ENCODE measurements at regions of chr9 and their contacts with region 1.

Region 1: DNA sequence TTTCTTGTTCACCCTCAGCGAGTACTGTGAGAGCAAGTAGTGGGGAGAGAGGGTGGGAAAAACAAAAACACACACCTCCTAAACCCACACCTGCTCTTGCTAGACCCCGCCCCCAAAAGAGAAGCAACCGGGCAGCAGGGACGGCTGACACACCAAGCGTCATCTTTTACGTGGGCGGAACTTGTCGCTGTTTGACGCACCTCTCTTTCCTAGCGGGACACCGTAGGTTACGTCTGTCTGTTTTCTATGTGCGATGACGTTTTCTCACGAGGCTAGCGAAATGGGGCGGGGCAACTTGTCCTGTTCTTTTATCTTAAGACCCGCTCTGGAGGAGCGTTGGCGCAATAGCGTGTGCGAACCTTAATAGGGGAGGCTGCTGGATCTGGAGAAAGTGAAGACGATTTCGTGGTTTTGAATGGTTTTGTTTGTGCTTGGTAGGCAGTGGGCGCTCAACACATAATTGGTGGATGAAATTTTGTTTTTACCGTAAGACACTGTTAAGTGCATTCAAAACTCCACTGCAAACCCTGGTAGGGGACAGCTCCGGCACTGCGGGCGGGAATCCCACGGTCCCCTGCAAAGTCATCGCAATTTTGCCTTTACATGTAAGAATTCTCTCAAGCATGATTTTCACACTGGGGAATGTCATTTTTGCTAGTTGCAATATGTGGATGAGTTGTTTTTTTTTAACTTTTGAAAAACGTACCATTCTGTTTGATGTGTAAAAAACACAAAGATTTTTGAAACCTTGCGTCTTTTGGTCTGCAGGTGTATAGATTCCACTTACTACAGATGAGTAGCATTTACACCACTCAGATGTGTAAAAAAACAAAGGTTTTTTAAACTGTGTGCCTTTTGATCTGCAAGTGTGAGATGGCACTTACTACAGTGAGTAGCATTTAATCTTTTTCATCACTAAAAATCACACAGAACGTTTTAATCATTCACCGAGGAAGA is 631 bp upstream of the C9orf72 start:
- DNase-seq: peak; percentile 98
- ATAC-seq: peak; percentile 72
- H3K4me3 Mint-ChIP-seq: peak overlapping the region; percentile 88
- H3K27ac Mint-ChIP-seq: peak overlapping the region; percentile 100
- H3K4me1 Mint-ChIP-seq: peaks cover 32% of the 10 kb centered on the region
- H3K27me3 Mint-ChIP-seq: no peaks in the 10 kb centered on the region

Region 2: GRCh38 chr9:26892251-26893029 is 681.5 kb before region 1 on chr9 and contains the start of gene CAAP1:
- CTCF ChIA-PET with region 1: no interaction called
- POLR2A ChIA-PET with region 1: no interaction called
- intact Hi-C with region 1: loop called in 1 of 2 experiments (anchors 1 kb)
- DNase-seq: peak; percentile 98
- ATAC-seq: peak; percentile 92
- H3K4me3 Mint-ChIP-seq: peak within 1 kb of the TSS; percentile 100
- H3K27ac Mint-ChIP-seq: peak within 1 kb of the TSS; percentile 100
- H3K4me1 Mint-ChIP-seq: peaks cover 36% of the 10 kb centered on the region
- H3K27me3 Mint-ChIP-seq: no peaks in the 10 kb centered on the region
- total RNA-seq, gene CAAP1: 17.1 to 21.4 TPM

Region 3: GRCh38 chr9:26946753-26947727 is 626.9 kb before region 1 on chr9 and contains the start of gene PLAA:
- CTCF ChIA-PET with region 1: no interaction called
- POLR2A ChIA-PET with region 1: no interaction called
- intact Hi-C with region 1: loop called in 1 of 2 experiments (anchors 1 kb)
- DNase-seq: peak; percentile 93
- ATAC-seq: peak; percentile 96
- H3K4me3 Mint-ChIP-seq: peak within 1 kb of the TSS; percentile 88
- H3K27ac Mint-ChIP-seq: peak within 1 kb of the TSS; percentile 99
- H3K4me1 Mint-ChIP-seq: peaks cover 48% of the 10 kb centered on the region
- H3K27me3 Mint-ChIP-seq: peaks cover 3% of the 10 kb centered on the region
- total RNA-seq, gene PLAA: 30.9 to 36.5 TPM

Region 4: DNA sequence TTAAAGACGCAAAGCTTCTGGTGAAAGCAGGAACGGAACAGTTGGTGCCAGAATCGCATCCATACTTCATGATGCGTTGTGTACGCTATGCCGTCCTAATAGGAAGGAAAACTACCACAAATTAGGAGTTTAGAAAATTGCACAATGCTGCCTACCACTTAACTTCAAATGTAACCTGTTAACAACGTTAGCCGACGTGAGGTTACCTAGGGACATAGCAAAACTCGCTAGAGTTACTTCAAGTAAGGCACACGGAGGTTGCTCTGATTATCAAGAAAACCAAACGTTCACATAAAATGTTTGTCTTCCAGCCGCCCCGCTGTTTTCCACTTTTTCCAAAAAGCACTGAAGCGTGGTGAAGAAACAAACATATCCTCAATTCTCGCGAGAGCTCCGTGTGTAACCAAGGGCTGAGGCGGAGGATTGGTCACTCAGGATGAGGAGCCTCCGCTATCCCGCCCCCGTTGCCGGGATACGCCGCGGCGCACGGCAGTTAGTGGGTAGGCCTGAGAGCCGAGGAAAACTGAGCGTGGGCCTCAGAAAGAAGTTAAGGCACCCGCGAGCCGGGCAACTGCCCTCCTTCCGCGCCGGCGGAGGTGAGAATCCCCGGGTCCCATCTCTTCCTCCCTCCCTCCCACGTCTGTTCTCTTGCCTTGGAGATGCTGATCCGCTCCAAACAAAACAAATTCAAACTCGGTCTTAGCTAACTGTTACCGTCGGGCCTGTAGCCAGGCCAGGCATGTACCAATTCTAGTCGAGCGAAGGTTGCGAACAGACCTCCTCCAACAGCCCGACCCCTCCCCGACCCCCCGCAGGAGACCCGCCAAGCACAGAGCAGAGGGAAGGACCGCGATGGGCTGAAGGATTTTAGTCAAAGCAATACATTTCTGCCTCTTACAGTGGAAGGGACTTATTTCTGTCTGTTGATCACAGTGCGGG is 617.7 kb before region 1 on chr9 and contains the start of gene IFT74:
- CTCF ChIA-PET with region 1: no interaction called
- POLR2A ChIA-PET with region 1: no interaction called
- intact Hi-C with region 1: loop called (anchors 1 to 5 kb)
- DNase-seq: peak; percentile 96
- ATAC-seq: peak; percentile 99
- H3K4me3 Mint-ChIP-seq: peak within 1 kb of the TSS; percentile 88
- H3K27ac Mint-ChIP-seq: peak within 1 kb of the TSS; percentile 85
- H3K4me1 Mint-ChIP-seq: peaks cover 32% of the 10 kb centered on the region
- H3K27me3 Mint-ChIP-seq: no peaks in the 10 kb centered on the region
- total RNA-seq, gene IFT74: 10.5 to 11.6 TPM

Region 5: DNA sequence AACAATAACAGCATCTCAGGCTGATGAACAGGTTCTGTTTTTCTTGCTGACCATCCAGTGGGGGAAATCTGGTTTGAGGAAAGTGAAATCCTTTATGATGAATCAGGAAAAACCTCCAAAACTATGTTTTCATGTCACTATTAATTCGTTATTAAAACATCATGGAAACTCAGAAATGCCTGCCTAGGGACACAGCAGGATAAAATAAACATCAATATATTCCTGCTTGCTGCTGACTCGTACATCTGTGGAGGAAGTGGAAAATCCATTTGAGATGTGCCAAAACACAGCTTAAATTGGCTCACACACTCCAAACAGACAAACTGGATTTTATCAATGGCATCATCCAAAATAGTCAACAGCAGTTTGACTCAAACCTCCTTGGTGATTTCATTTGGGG is 411.9 kb before region 1 on chr9:
- CTCF ChIA-PET with region 1: no interaction called
- POLR2A ChIA-PET with region 1: no interaction called
- intact Hi-C with region 1: no loop called
- DNase-seq: no peak
- ATAC-seq: no peak
- H3K4me3 Mint-ChIP-seq: no peak overlapping the region
- H3K27ac Mint-ChIP-seq: no peak overlapping the region
- H3K4me1 Mint-ChIP-seq: no peaks in the 10 kb centered on the region
- H3K27me3 Mint-ChIP-seq: peaks cover 4% of the 10 kb centered on the region

Region 6: DNA sequence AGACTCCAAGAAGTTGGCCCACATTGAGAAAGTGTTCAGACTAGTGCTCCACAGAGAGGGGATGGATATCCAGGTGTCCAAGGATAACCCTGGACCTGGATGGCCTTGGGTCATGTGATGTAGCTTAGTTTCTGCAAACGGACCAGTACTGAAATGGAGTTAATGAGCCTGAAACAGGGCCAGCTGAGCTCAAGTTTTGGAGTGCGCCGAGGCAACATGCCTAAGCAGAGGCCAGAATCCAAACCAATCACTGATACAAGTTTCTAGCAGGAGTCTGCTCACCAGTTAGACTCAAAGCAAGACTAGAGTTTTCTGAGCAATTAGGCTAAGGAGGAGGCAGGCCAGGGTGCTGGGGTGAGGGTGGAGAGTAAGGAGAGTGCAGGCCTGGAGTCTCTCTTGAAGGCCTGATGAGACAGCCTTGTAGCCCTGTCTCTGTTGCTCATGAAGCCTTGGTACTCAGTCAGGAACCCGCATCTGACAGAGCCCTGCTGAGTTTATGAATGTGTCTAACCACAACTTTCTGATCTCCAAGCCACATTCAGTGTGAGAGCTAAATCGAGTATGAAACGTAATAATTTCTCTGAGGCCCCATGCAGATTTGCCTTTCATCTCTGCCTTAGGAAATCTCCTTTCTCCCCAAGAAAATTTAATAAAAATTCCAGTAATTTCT is 208.1 kb before region 1 on chr9:
- CTCF ChIA-PET with region 1: no interaction called
- POLR2A ChIA-PET with region 1: interaction called, 6 read pairs
- intact Hi-C with region 1: loop called (anchors 1 to 2 kb)
- DNase-seq: peak; percentile 82
- ATAC-seq: peak; percentile 99
- H3K4me3 Mint-ChIP-seq: peak overlapping the region; percentile 30
- H3K27ac Mint-ChIP-seq: peak overlapping the region; percentile 58
- H3K4me1 Mint-ChIP-seq: peaks cover 35% of the 10 kb centered on the region
- H3K27me3 Mint-ChIP-seq: peaks cover 15% of the 10 kb centered on the region

Region 7: DNA sequence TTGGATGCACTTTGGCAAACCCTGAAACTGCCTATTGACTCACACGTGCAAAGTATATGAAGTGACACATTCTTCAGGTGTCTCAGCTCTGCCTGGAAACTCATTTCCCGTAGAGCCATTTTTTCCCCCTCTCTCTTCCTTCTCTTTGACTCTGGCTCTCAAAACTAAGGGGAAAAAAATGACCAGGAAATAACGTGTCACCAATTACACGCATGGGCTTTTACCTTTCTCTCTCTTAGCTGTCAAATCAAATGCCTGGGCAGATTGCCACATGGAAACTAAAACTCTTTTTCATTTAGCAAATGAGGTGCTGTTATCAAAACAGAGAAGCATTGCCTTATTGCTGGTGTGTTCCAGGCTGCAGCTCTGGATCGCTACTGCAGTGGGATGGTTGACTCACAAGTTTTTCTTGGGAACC is 68.2 kb before region 1 on chr9:
- CTCF ChIA-PET with region 1: no interaction called
- POLR2A ChIA-PET with region 1: no interaction called
- intact Hi-C with region 1: loop called in 1 of 2 experiments (anchors 2 kb)
- DNase-seq: peak; percentile 46
- ATAC-seq: peak; percentile 84
- H3K4me3 Mint-ChIP-seq: no peak overlapping the region
- H3K27ac Mint-ChIP-seq: no peak overlapping the region
- H3K4me1 Mint-ChIP-seq: peaks cover 21% of the 10 kb centered on the region
- H3K27me3 Mint-ChIP-seq: peaks cover 2% of the 10 kb centered on the region

Region 8: GRCh38 chr9:28774416-28775235 is 1200.7 kb after region 1 on chr9:
- CTCF ChIA-PET with region 1: no interaction called
- POLR2A ChIA-PET with region 1: interaction called, 13 read pairs
- intact Hi-C with region 1: no loop called
- DNase-seq: no peak
- ATAC-seq: no peak
- H3K4me3 Mint-ChIP-seq: no peak overlapping the region
- H3K27ac Mint-ChIP-seq: no peak overlapping the region
- H3K4me1 Mint-ChIP-seq: no peaks in the 10 kb centered on the region
- H3K27me3 Mint-ChIP-seq: no peaks in the 10 kb centered on the region

Measured in activated CD4-positive, alpha-beta T cell treated with anti-CD3 and anti-CD28 coated beads for 36 hours (primary cell).